AG04449 (cell line): ENCODE measurements at regions of chr1 and their contacts with region 1.

Region 1: GRCh38 chr1:75203415-75204277 is 69.5 kb downstream of the LHX8 start:
- DNase-seq: no peak
- H3K4me3 ChIP-seq: no peak overlapping the region
- CTCF ChIP-seq: peak; percentile 47

Region 2: GRCh38 chr1:74763807-74764206 is 439.8 kb before region 1 on chr1:
- CTCF ChIA-PET with region 1: interaction called, 23 read pairs
- POLR2A ChIA-PET with region 1: no interaction called
- DNase-seq: no peak
- H3K4me3 ChIP-seq: no peak overlapping the region
- CTCF ChIP-seq: no peak

Region 3: GRCh38 chr1:75328691-75329090 is 125.0 kb after region 1 on chr1:
- CTCF ChIA-PET with region 1: no interaction called
- POLR2A ChIA-PET with region 1: no interaction called
- DNase-seq: no peak
- H3K4me3 ChIP-seq: no peak overlapping the region
- CTCF ChIP-seq: no peak